ENCODE measurements at regions of chr2 and their contacts with region 1.

Region 1: DNA sequence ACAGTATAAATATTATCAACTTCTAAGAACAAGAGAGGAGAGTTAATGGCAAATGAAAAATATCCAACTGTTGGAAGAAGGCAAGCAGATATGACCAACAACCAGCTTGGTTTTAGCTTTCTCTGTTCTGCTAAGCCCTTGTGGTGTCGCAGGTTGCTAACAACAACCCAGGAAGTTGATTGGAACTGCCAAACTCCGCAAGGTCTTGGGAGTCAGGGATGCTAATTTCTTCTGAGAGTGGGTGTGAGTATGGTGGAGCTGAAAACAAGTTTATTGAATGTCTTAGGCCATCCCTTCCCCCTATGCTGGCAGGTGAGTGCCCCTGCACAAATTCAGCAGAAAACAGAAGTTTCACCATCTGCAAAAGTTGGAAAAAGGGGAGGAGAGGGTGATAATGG is 17.5 kb downstream of the BZW1 start:
- DNase-seq: no peak
- ATAC-seq: no peak
- H3K4me3 ChIP-seq: no peak overlapping the region
- H3K4me3 Mint-ChIP-seq: no peak overlapping the region
- H3K27ac ChIP-seq: no peak overlapping the region
- H3K27ac Mint-ChIP-seq: peak overlapping the region; percentile 49
- H3K4me1 ChIP-seq: no peaks in the 10 kb centered on the region
- H3K4me1 Mint-ChIP-seq: peaks cover 3% of the 10 kb centered on the region
- H3K27me3 ChIP-seq: no peaks in the 10 kb centered on the region
- H3K27me3 Mint-ChIP-seq: no peaks in the 10 kb centered on the region
- CTCF ChIP-seq: no peak

Region 2: DNA sequence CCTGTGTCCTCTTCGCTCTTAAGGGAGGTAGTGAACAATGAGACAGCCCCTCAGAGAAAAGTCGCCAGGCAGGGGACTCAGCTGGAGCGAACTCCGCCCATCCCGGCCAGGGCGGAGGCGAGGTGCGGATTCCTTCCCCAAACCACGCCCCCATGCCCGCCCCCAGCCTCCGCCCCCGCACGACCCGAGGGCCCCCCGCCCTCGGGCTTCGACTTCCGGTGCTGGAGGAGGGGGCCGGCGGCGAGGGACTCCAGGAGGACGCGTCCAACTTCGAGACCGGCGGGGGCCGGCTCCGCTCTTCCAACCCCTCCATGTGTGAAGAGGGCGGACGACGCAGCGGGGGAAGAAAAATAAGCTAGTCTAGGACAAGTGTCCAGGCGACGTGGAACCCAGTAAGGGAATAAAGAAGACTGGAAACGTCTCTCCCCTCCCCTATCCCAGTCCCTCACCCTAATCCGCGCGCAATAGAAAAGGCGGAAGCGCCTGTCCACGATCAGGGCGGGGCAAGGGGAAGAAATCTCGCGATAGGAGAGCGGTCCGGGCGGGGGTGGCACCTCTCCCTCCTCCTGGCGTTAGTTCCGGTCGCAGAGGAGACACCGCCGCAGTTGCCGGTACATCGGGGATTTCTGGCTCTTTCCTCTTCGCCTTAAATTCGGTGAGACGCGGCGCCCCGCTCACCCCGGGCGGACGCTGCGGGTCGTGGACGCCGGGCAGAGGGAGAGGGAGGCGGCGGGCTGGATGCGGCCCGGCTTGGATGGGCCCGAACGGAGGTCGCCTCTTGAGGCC is 17.7 kb before region 1 on chr2 and contains the start of gene BZW1:
- CTCF ChIA-PET with region 1: no interaction called
- POLR2A ChIA-PET with region 1: no interaction called
- intact Hi-C with region 1: no loop called
- DNase-seq: peak; percentile 94 to 98 (median 97)
- ATAC-seq: peak; percentile 82
- H3K4me3 ChIP-seq: peak within 1 kb of the TSS; percentile 69 to 90
- H3K4me3 Mint-ChIP-seq: peak within 1 kb of the TSS; percentile 99
- H3K27ac ChIP-seq: peak within 1 kb of the TSS; percentile 98
- H3K27ac Mint-ChIP-seq: peak within 1 kb of the TSS; percentile 98
- H3K4me1 ChIP-seq: peaks cover 33% of the 10 kb centered on the region
- H3K4me1 Mint-ChIP-seq: peaks cover 48% of the 10 kb centered on the region
- H3K27me3 ChIP-seq: no peaks in the 10 kb centered on the region
- H3K27me3 Mint-ChIP-seq: no peaks in the 10 kb centered on the region
- CTCF ChIP-seq: no peak
- total RNA-seq, gene BZW1: 330 to 338 TPM

Region 3: DNA sequence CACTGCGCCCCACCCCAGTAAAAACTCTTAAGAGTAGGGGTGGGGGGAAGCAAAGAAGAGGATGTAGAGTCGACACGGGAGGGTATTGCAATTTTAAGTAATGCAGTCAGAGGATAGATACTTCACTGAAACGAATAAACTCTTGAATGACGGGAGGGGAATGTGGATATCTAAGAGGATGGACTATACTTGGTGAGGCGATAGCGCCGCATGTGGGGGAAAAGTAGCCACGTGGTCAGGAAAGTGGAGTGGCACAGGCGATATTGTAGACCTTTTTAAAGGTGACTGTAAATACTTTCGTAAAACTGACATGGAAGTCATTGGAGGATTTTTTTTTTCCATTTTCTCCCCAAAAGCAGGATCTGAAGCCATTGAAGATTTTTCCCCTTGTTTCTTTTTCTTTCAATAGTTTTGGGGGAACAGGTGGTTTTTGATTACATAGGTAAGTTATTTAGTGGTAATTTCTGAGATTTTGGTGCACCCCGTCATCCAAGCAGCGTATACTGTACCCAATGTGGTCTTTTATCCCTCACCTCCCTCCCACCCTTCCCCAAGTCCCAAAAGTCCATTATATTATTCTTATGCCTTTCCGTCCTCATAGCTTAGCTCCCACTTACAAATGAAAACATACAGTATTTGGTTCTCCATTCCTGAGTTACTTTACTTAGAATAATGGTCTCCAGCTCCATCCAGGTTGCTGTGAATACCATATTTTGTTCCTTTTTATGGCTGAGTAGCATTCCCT is 21.4 kb after region 1 on chr2:
- CTCF ChIA-PET with region 1: no interaction called
- POLR2A ChIA-PET with region 1: interaction called, 5 read pairs
- intact Hi-C with region 1: loop called in 1 of 2 experiments (anchors 2 kb)
- DNase-seq: peak in 1 of 9 experiments; percentile 50
- ATAC-seq: no peak
- H3K4me3 ChIP-seq: no peak overlapping the region
- H3K4me3 Mint-ChIP-seq: no peak overlapping the region
- H3K27ac ChIP-seq: no peak overlapping the region
- H3K27ac Mint-ChIP-seq: no peak overlapping the region
- H3K4me1 ChIP-seq: no peaks in the 10 kb centered on the region
- H3K4me1 Mint-ChIP-seq: peaks cover 4% of the 10 kb centered on the region
- H3K27me3 ChIP-seq: no peaks in the 10 kb centered on the region
- H3K27me3 Mint-ChIP-seq: no peaks in the 10 kb centered on the region
- CTCF ChIP-seq: no peak